Heart left ventricle (tissue), 16 donors: ENCODE measurements at regions of chr11 and their contacts with region 1.

Region 1: GRCh38 chr11:49230511-49230910 is 22.1 kb upstream of the FOLH1 start:
- DNase-seq: no peak
- ATAC-seq: peak in 1 of 4 donors; percentile 36
- H3K4me3 ChIP-seq: no peak overlapping the region
- H3K27ac ChIP-seq: no peak overlapping the region
- H3K4me1 ChIP-seq: no peaks in the 10 kb centered on the region
- H3K27me3 ChIP-seq: no peaks in the 10 kb centered on the region
- CTCF ChIP-seq: peak in 4 of 12 donors; percentile 7 to 23 (median 19)
- POLR2A ChIP-seq: no peak

Region 2: GRCh38 chr11:49151211-49151610 is 79.3 kb before region 1 on chr11:
- intact Hi-C with region 1: no loop called
- DNase-seq: no peak
- ATAC-seq: no peak
- H3K4me3 ChIP-seq: no peak overlapping the region
- H3K27ac ChIP-seq: no peak overlapping the region
- H3K4me1 ChIP-seq: no peaks in the 10 kb centered on the region
- H3K27me3 ChIP-seq: no peaks in the 10 kb centered on the region
- CTCF ChIP-seq: no peak
- POLR2A ChIP-seq: no peak

Region 3: GRCh38 chr11:49316180-49316579 is 85.7 kb after region 1 on chr11:
- intact Hi-C with region 1: no loop called
- DNase-seq: no peak
- ATAC-seq: no peak
- H3K4me3 ChIP-seq: no peak overlapping the region
- H3K27ac ChIP-seq: no peak overlapping the region
- H3K4me1 ChIP-seq: no peaks in the 10 kb centered on the region
- H3K27me3 ChIP-seq: no peaks in the 10 kb centered on the region
- CTCF ChIP-seq: no peak
- POLR2A ChIP-seq: no peak

Region 4: DNA sequence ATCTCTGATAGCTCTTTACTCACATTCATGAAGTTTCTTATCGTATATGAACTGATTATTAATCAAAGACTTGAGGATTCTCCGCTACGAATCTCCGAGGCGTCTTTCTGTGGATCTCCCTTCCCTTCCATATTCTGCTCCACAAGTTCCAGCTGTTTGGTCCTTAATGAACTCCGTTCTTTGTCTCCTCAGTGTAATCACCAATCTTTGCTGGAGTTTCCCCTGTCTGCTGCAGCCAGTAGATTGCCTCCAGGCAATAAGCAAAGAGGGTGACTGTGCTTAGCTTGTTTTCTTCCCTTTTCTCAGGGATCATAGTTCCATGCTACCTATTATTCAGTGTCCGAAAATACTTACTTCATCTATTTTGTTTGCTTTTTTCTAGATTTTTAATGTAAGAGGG is 147.5 kb after region 1 on chr11:
- intact Hi-C with region 1: loop called in 2 of 10 experiments (anchors 5 to 10 kb)
- DNase-seq: no peak
- ATAC-seq: no peak
- H3K4me3 ChIP-seq: no peak overlapping the region
- H3K27ac ChIP-seq: no peak overlapping the region
- H3K4me1 ChIP-seq: peaks cover 0 to 8% (median 0%) of the 10 kb centered on the region in 12 donors
- H3K27me3 ChIP-seq: no peaks in the 10 kb centered on the region
- CTCF ChIP-seq: no peak
- POLR2A ChIP-seq: no peak

Region 5: GRCh38 chr11:49533204-49533603 is 302.7 kb after region 1 on chr11:
- intact Hi-C with region 1: loop called in 8 of 10 experiments (anchors 5 to 10 kb)
- DNase-seq: no peak
- ATAC-seq: no peak
- H3K4me3 ChIP-seq: no peak overlapping the region
- H3K27ac ChIP-seq: no peak overlapping the region
- H3K4me1 ChIP-seq: no peaks in the 10 kb centered on the region
- H3K27me3 ChIP-seq: no peaks in the 10 kb centered on the region
- CTCF ChIP-seq: no peak
- POLR2A ChIP-seq: no peak